HAP-1 (cell line): ENCODE measurements at regions of chr5 and their contacts with region 1.

Region 1: GRCh38 chr5:38809388-38810359 is 36.1 kb upstream of the OSMR start:
- DNase-seq: peak; percentile 71 to 85
- H3K4me3 ChIP-seq: no peak overlapping the region
- H3K4me1 ChIP-seq: no peaks in the 10 kb centered on the region
- H3K27me3 ChIP-seq: no peaks in the 10 kb centered on the region

Region 2: DNA sequence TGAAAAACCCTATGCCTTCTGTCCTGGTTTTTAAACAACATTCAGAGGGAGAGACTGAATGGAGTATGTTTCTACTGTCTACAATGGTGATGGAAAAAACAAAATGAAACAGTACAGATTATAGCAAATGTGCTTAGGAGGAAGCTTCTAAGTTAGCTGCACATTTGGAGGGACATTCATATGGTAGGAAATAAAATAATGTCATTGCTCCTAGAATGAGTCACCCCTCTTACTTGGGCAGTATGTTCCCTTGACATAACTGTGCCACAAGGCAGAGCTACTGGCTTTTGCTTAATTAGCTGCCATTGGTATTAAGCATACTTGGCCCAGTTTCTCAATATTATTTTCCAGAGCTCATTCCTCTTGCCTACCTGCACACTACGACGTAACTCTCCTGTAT is 1098.7 kb before region 1 on chr5:
- in situ Hi-C with region 1: no loop called
- DNase-seq: no peak
- H3K4me3 ChIP-seq: no peak overlapping the region
- H3K4me1 ChIP-seq: no peaks in the 10 kb centered on the region
- H3K27me3 ChIP-seq: no peaks in the 10 kb centered on the region

Region 3: DNA sequence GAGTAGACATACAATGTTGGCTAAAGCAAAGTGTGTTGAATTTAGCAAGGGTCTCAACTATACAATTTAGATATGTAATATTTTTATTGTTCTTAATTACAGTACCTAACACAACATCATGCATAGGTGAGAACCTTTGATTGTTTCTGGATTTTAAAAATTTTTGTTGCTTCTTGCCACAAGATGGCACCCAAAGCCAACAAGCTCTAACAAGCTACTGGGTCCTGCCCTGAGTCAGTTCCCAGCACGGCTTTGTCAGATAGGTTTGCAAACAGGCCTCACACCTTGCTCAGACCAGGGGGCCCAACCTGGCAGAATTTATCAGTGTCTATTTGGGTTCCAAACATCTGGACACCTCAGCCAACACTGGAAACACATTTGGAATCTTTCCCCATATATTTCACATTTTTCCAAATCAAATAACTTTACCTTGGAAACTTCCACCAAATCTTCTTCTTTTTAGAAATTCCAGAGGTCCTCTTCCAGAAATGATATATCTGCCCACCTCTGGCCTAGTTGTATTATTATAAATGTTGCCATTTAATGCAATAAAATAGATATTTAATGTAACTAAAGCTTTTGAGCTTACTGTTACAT is 600.8 kb before region 1 on chr5:
- in situ Hi-C with region 1: loop called (anchors 10 kb)
- DNase-seq: peak; percentile 32 to 38
- H3K4me3 ChIP-seq: no peak overlapping the region
- H3K4me1 ChIP-seq: no peaks in the 10 kb centered on the region
- H3K27me3 ChIP-seq: no peaks in the 10 kb centered on the region

Region 4: GRCh38 chr5:38265546-38266179 is 544.0 kb before region 1 on chr5:
- in situ Hi-C with region 1: loop called (anchors 10 kb)
- DNase-seq: peak; percentile 51 to 87
- H3K4me3 ChIP-seq: no peak overlapping the region
- H3K4me1 ChIP-seq: no peaks in the 10 kb centered on the region
- H3K27me3 ChIP-seq: peaks cover 4% of the 10 kb centered on the region; the same call in 1 of the 2 replicates

Region 5: GRCh38 chr5:38434966-38435705 is 374.5 kb before region 1 on chr5:
- in situ Hi-C with region 1: loop called (anchors 5 kb)
- DNase-seq: no peak
- H3K4me3 ChIP-seq: no peak overlapping the region
- H3K4me1 ChIP-seq: no peaks in the 10 kb centered on the region
- H3K27me3 ChIP-seq: peaks cover 2% of the 10 kb centered on the region; the same call in 1 of the 2 replicates

Region 6: DNA sequence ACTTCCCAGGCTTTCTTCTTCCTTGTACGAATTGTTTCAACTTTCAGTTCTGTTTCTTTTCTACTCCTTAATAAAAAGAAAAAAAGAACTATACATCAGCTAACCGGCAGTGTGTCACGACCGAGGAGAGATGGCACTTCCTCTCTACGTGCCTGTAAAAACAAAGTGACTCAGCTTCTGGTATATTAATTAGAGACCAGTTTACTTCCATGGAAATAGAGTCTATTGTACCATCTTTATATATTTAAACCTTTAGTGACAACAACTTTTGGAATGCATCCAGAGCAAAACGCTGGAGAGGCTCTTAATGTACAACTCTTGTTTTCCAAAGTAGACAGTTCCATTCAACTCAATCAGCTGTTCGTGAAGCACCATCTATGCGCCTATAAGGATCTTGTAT is 158.7 kb before region 1 on chr5:
- in situ Hi-C with region 1: no loop called
- DNase-seq: no peak
- H3K4me3 ChIP-seq: no peak overlapping the region
- H3K4me1 ChIP-seq: no peaks in the 10 kb centered on the region
- H3K27me3 ChIP-seq: no peaks in the 10 kb centered on the region